Activated CD4-positive, alpha-beta T cell treated with anti-CD3 and anti-CD28 coated beads for 36 hours (primary cell): ENCODE measurements at regions of chr5 and their contacts with region 1.

Region 1: DNA sequence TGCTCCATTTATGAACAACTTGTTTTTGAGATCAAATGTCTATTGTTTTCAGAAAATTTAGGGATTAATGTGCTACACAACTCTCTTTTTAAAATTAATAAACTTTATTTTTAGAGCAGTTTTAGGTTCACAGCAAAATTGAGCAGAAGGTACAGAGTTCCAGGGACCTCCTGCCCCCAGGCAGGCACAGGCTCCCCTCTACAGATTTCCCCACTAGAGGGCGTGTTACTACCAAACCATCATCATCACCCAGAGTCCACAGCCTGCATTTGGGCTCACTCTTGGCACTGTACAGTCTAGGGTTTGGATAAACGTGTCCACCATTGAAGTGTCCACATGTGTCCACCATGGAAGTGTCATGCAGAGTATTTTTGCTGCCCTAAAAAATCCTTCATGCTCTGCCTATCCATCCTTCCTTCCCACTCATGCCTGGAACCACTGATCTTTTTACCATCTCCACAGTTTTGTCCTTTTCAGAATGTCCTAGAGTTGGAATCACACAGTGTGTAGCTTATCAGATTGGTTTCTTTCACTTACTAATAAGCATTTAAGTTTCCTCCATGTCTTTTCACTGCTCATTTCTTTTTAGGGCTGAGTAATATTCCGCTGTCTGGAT is 61.7 kb downstream of the MRPL36 start:
- DNase-seq: peak; percentile 62
- ATAC-seq: peak; percentile 85
- H3K4me3 Mint-ChIP-seq: no peak overlapping the region
- H3K27ac Mint-ChIP-seq: no peak overlapping the region
- H3K4me1 Mint-ChIP-seq: no peaks in the 10 kb centered on the region
- H3K27me3 Mint-ChIP-seq: peaks cover 24% of the 10 kb centered on the region

Region 2: DNA sequence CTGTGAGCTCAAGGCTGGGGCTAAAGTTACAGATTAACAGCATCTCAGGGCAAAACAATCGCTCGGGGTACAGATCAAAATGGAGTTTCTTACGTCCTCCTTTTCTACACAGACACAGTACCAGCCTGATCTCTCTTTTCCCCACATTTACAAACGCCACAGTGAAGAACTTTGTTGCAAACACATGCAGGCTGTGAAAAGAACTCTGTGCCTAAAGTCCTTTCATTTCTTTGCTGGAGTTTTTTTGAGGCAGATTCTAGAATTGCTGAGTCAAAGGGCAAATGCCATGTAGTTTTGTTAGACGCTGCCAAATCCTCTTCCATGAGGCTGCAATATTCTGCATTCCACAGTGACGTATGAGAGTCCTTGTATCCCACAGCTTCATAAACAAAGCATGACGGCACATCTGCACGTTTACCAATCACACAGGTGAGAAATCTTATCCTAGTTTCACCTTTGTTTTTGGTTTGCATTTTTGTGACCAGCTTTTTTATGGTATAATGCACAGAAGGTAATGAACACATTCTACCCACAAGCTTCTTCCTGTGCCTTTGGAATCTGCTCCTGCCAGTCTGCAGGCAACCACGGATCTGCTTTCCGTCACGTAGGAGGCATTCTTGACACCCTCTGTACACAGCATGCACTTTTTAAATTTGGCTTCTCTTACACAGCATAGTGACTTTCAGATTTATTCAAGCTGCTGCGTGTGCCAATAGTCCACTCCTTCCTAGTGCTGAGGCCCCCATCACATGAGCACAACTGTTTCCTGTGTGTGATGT is 169.5 kb before region 1 on chr5:
- CTCF ChIA-PET with region 1: no interaction called
- POLR2A ChIA-PET with region 1: no interaction called
- intact Hi-C with region 1: no loop called
- DNase-seq: no peak
- ATAC-seq: no peak
- H3K4me3 Mint-ChIP-seq: no peak overlapping the region
- H3K27ac Mint-ChIP-seq: no peak overlapping the region
- H3K4me1 Mint-ChIP-seq: no peaks in the 10 kb centered on the region
- H3K27me3 Mint-ChIP-seq: no peaks in the 10 kb centered on the region

Region 3: DNA sequence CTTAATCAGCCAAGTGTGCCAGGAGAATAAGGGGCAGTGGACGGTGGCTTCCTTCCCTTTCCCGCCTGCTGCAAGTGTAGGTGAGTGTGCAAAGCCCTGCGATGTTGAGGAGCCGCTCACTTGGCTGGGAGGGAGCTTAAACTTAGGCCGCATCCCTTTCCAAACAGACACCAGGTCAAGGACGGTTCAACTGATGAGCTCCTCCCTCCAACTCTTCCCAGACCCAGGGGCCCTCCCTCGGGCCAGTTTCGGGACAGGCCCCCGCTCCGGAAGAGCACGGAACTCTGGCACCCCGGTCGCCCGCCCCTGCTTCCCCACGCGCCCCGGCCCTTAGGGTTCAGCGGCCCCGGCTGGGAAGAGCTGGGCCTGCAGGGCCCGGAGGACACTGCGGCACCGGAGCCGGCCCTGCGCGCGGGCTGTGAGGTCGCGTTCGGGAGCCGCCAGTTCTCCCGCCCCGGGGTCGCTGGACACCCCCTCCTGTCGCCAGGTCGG is 61.3 kb after region 1 on chr5:
- CTCF ChIA-PET with region 1: no interaction called
- POLR2A ChIA-PET with region 1: no interaction called
- intact Hi-C with region 1: no loop called
- DNase-seq: peak; percentile 69
- ATAC-seq: peak; percentile 34
- H3K4me3 Mint-ChIP-seq: peak overlapping the region; percentile 94
- H3K27ac Mint-ChIP-seq: peak overlapping the region; percentile 97
- H3K4me1 Mint-ChIP-seq: peaks cover 56% of the 10 kb centered on the region
- H3K27me3 Mint-ChIP-seq: no peaks in the 10 kb centered on the region

Region 4: DNA sequence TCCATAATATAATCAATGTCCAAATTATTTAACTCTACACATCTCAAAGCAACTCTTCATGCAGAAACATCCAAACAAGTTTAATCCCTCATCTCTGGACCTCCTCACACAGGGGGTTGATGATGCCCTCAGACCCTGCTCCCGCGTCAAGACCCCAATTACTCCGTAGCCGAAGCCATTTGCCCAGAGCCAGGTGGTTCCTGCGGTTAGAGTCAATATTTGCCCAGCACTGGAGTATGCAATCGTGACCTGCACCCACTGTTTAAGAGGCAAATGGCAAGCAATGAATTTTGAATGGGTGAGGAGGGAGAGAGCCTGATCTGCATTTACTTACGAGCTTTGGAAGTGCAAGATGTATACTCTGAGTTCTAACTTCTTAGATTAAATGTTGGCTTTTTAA is 416.8 kb after region 1 on chr5:
- CTCF ChIA-PET with region 1: no interaction called
- POLR2A ChIA-PET with region 1: no interaction called
- intact Hi-C with region 1: loop called in 1 of 2 experiments (anchors 5 kb)
- DNase-seq: no peak
- ATAC-seq: no peak
- H3K4me3 Mint-ChIP-seq: no peak overlapping the region
- H3K27ac Mint-ChIP-seq: no peak overlapping the region
- H3K4me1 Mint-ChIP-seq: no peaks in the 10 kb centered on the region
- H3K27me3 Mint-ChIP-seq: peaks cover 9% of the 10 kb centered on the region